Activated naive CD4-positive, alpha-beta T cell treated with anti-CD3 and anti-CD28 coated beads for 36 hours (primary cell): ENCODE measurements at regions of chr4 and their contacts with region 1.

Region 1: DNA sequence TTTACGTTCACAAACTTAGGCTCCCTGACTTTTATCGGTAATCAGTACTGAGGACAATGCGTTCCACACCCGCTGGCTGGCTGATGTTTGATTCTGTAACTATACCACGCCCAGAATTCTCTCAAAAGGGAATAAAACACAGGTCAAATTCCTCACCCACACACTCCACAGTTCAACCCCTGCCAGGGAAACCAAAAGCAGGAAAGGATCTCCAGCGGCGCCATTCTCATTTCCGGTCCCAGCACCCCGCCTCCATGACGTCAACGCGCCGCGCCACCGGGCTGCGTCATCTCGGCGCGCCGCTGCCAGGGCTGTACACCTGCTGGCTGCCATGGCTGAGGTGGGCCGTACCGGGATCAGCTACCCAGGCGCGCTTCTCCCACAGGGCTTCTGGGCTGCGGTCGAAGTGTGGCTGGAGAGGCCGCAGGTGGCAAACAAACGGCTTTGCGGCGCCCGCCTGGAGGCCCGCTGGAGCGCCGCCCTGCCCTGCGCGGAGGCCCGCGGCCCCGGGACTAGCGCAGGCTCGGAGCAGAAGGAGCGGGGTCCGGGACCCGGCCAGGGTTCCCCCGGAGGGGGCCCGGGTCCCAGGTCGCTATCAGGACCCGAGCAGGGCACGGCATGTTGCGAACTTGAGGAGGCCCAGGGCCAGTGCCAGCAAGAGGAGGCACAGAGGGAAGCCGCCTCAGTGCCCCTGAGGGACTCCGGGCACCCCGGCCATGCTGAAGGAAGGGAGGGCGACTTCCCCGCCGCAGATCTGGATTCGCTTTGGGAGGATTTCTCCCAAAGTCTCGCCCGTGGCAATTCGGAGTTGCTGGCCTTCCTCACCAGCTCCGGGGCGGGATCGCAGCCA is at the starts of genes ACOX3 and TRMT44:
- DNase-seq: peak; percentile 93
- H3K4me3 Mint-ChIP-seq: peak within 1 kb of the TSS; percentile 98
- H3K27ac Mint-ChIP-seq: peak within 1 kb of the TSS; percentile 98
- H3K4me1 Mint-ChIP-seq: peaks cover 69% of the 10 kb centered on the region
- H3K27me3 Mint-ChIP-seq: no peaks in the 10 kb centered on the region
- total RNA-seq, gene ACOX3: 11.9 to 13.3 TPM
- total RNA-seq, gene TRMT44: 13.1 to 14.5 TPM

Region 2: DNA sequence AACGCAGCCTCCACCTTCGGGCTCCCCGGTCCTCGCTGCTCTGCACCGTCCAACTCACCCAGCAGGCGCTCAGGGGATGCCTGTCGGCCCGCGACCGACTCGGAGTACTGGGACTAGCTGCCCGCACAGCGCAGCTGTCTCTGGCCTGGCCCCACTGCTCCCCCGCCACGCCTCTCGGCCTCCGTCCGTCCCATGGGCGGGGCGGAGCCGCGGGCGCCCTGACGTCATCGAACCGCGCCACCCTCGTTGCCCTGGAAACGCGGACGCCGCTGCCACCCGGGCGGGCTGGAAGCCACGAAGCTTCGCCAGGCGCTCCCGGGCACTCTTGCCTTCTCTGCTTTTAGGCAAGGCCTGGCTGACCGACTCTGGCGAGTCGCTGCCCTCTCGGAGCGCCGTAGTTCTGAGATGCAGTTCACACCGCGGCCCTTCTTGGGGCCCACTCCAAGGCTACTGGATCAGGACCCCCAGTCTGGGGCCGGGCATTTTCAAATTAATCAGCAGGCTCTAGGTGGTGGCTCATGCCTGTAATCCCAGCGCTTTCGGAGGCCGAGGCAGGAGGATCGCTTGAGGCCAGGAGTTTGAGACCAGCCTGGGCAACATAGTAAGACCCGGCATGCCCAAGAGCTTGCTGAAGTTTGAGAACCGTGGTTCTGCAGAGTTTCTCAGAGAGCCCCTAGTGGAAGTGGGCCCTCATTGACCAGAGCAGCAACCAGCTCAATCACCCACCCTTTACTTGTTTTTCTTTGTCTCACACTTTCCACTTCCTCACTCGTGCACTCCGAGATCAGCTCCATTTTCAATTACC is 12.2 kb before region 1 on chr4:
- CTCF ChIA-PET with region 1: no interaction called
- intact Hi-C with region 1: loop called (anchors 1 kb)
- DNase-seq: peak; percentile 87
- H3K4me3 Mint-ChIP-seq: peak overlapping the region; percentile 95
- H3K27ac Mint-ChIP-seq: peak overlapping the region; percentile 58
- H3K4me1 Mint-ChIP-seq: peaks cover 25% of the 10 kb centered on the region
- H3K27me3 Mint-ChIP-seq: no peaks in the 10 kb centered on the region